AG04450 (cell line): ENCODE measurements at regions of chr9 and their contacts with region 1.

Region 1: DNA sequence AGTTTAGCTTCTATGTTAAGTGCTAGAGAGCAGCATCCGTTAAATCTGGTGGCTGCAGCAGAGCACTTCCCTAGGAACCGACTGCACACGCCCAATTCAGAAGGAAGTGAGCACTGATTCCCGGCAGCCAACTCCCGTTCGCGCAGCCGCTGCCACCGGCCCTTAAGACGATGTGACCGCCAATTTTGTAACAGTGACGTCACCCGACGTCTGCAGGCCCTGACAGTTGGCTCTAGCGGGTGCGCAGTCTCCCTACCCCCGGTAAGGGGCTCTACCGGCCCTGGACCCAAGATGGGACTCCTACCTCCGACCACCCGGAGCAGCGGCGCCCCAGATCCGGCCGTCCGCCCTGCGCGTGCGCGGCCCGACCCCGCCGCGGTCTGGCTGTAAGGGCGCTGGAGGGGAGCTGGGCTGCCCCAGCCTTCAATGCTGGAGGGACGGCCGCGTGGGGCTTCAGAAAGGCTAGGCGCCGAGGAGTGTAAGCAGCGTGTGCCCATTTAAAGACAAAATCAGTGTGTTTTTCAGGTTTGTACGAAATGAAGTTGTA is 19.1 kb downstream of the DNAJA1 start:
- DNase-seq: peak; percentile 71
- H3K4me3 ChIP-seq: peak overlapping the region; percentile 73
- H3K27ac ChIP-seq: peak overlapping the region; percentile 82
- H3K27me3 ChIP-seq: no peaks in the 10 kb centered on the region
- CTCF ChIP-seq: no peak

Region 2: DNA sequence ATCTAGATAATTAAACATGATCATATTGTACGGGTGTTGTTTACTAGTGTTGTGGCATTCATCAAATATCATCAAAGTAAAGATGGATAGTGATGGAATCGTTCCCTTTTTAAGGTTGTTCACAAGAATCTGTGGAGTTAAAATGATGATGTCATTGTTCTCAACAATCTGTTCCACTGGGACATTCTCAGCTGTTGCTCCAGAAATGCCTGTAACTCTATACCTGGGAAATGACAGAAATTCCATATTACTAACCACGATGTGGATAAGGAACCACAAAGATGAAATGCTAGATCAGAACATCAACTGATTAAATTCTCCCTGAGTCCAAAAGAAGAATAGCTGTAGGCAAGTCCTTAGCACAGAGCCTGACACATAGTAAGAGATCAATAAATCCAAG is 556.2 kb before region 1 on chr9:
- CTCF ChIA-PET with region 1: no interaction called
- POLR2A ChIA-PET with region 1: interaction called, 10 read pairs
- DNase-seq: peak; percentile 21
- H3K4me3 ChIP-seq: no peak overlapping the region
- H3K27ac ChIP-seq: no peak overlapping the region
- H3K27me3 ChIP-seq: no peaks in the 10 kb centered on the region
- CTCF ChIP-seq: no peak

Region 3: GRCh38 chr9:32992595-32993238 is 51.5 kb before region 1 on chr9:
- CTCF ChIA-PET with region 1: no interaction called
- POLR2A ChIA-PET with region 1: no interaction called
- DNase-seq: no peak
- H3K4me3 ChIP-seq: no peak overlapping the region
- H3K27ac ChIP-seq: peak overlapping the region; percentile 42
- H3K27me3 ChIP-seq: no peaks in the 10 kb centered on the region
- CTCF ChIP-seq: no peak

Region 4: GRCh38 chr9:33024966-33025571 is 19.1 kb before region 1 on chr9 and contains the start of gene DNAJA1:
- CTCF ChIA-PET with region 1: no interaction called
- POLR2A ChIA-PET with region 1: interaction called, 26 read pairs
- DNase-seq: peak; percentile 83
- H3K4me3 ChIP-seq: peak within 1 kb of the TSS; percentile 99
- H3K27ac ChIP-seq: peak within 1 kb of the TSS; percentile 94
- H3K27me3 ChIP-seq: no peaks in the 10 kb centered on the region
- CTCF ChIP-seq: no peak
- polyA plus RNA-seq, gene DNAJA1: 180 and 237 TPM in 2 replicates